ENCODE measurements at regions of chr11 and their contacts with region 1.

Region 1: GRCh38 chr11:58433638-58434203 is 5.8 kb upstream of the OR5B2 start:
- DNase-seq: no peak
- CTCF ChIP-seq: no peak

Region 2: DNA sequence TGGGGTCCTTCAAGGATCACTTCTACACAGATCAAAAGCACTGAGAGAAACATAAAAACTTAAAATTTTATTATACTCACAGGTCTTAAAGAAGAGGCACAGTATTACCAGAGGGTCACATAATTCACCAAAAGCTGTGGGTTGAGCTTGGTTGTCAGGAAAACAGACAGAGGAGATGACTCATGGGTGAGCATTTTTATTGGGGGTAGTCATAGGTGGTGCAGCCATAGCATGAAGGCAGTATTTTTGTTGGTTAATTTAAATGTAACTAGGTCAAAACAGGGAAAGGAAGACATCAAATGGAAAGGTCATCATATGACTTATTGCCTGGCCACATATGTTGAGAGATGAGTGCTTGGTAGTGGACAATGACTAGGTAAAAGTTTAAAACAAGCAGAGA is 99.0 kb before region 1 on chr11:
- in situ Hi-C with region 1: loop called (anchors 25 kb)
- DNase-seq: no peak
- CTCF ChIP-seq: no peak